Left colon (tissue), 2 donors: ENCODE measurements at regions of chr1 and their contacts with region 1.

Region 1: DNA sequence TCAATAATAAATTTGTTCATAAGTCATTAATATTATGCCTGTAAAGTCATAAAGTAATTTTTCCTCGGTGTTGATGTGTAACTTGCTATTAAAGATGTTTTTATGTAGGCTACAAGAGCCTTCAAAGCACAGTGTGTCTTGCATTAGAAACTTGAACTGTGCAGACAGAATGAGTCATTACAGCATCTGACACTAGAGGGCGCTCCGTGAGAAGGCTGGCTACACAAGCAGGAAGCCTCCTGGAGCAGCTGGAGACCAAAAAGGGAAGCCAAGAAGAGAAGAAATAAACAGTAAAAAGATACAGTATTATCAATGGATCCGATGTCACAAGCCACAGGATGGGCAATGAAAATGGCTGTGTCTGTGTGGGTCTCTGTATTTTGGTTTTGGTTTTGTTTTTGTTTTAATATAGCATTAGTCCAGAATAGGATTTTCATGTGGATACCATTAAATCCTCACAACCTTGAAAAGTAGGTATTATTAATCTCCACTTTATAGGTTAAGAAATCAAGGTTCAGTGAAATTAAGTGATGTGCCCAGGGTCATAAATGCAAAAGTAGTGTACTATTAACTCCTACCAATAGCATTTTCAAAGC is 16.1 kb upstream of the LRRC8D start:
- DNase-seq: peak; percentile 72 to 90
- ATAC-seq: peak; percentile 93

Region 2: GRCh38 chr1:89987170-89987819 is 182.6 kb after region 1 on chr1:
- intact Hi-C with region 1: loop called (anchors 2 to 10 kb)
- DNase-seq: peak in 1 of 2 donors; percentile 31
- ATAC-seq: peak; percentile 37